Ascending aorta (tissue), 2 donors: ENCODE measurements at regions of chr6 and their contacts with region 1.

Region 1: GRCh38 chr6:25359191-25359861 is 80.2 kb downstream of the CARMIL1 start:
- DNase-seq: peak in 1 of 2 donors; percentile 85
- H3K4me3 ChIP-seq: peak overlapping the region in 1 of 2 donors; percentile 23
- H3K27ac ChIP-seq: peak overlapping the region; percentile 77 to 91
- H3K4me1 ChIP-seq: peaks cover 9 to 76% of the 10 kb centered on the region in 2 donors
- H3K27me3 ChIP-seq: no peaks in the 10 kb centered on the region
- CTCF ChIP-seq: no peak

Region 2: DNA sequence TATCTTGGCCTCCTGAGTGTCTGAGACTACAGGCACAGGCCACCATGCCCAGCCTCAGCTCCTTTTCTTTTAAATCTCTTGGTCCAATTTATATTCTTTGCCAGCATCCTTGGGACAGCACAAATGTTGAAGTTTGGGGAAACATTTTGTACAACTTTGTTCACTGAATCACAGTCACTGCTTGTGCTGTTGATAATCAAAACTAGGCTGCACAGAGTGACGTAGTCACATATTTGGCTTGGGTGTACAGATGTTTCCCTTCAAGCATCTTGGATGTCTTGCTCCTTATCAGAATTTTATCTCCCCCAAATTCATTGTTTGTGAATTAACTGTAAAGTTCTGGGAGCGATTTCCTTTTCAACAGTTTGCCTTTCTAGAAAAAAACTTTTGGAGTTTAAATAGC is 62.3 kb before region 1 on chr6:
- intact Hi-C with region 1: loop called (anchors 5 kb)
- DNase-seq: peak in 1 of 2 donors; percentile 81
- H3K4me3 ChIP-seq: peak overlapping the region in 1 of 2 donors; percentile 20
- H3K27ac ChIP-seq: peak overlapping the region; percentile 89 to 93
- H3K4me1 ChIP-seq: peaks cover 26 to 74% of the 10 kb centered on the region in 2 donors
- H3K27me3 ChIP-seq: no peaks in the 10 kb centered on the region
- CTCF ChIP-seq: no peak

Region 3: DNA sequence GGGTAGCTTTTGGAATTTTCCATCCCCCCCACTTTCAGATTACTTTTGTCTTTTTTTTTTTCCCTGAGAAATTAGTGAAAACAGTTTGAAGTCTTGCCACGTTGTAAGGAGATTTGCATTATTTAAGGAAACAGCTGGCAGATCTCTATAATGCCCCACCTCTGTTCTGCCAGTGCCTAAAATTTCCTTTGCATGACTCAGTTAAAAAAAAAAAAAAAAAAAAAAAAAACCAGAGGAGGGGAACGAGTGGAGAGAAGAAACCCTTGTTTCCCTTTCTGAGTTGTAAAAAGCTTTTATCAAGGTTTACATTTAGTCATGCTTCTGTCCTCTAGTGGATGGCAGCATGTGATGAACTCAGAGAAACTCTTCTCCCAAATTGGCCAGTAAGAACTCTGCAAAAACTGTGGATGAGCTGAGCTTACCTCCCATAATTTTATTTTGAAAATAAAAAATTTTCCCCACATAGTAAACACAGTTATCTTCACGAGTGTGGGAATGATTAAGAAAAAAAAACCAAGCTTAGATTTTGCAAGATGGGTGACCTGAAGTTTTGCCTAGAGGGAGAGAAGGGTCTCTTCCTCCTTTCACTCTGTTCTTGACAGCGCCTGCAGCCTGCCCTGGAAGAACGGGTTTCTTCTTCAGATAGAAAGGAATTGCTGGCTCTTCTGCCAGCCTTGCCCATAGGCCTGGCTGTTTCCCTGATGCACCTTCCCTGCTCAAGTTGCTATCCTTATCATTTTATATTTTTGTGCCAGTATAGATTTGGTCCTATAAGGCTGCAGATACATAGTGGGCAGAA is 46.4 kb before region 1 on chr6:
- intact Hi-C with region 1: loop called (anchors 5 kb)
- DNase-seq: no peak
- H3K4me3 ChIP-seq: peak overlapping the region in 1 of 2 donors; percentile 13
- H3K27ac ChIP-seq: peak overlapping the region; percentile 12 to 77
- H3K4me1 ChIP-seq: peaks cover 3 to 60% of the 10 kb centered on the region in 2 donors
- H3K27me3 ChIP-seq: no peaks in the 10 kb centered on the region
- CTCF ChIP-seq: no peak